Aorta (tissue), 5 donors: ENCODE measurements at regions of chr1 and their contacts with region 1.

Region 1: GRCh38 chr1:204453141-204453772 is 41.3 kb downstream of the PIK3C2B start:
- DNase-seq: no peak
- ATAC-seq: no peak
- H3K4me3 ChIP-seq: no peak overlapping the region
- H3K27ac ChIP-seq: no peak overlapping the region
- H3K4me1 ChIP-seq: no peaks in the 10 kb centered on the region
- H3K27me3 ChIP-seq: no peaks in the 10 kb centered on the region

Region 2: GRCh38 chr1:204494281-204495077 is 41.2 kb after region 1 on chr1 and contains the start of gene PIK3C2B:
- intact Hi-C with region 1: loop called in 1 of 2 experiments (anchors 5 kb)
- DNase-seq: peak; percentile 92 to 94
- ATAC-seq: peak; percentile 94
- H3K4me3 ChIP-seq: peak within 1 kb of the TSS; percentile 51 to 85
- H3K27ac ChIP-seq: peak within 1 kb of the TSS in 1 of 2 donors; percentile 62
- H3K4me1 ChIP-seq: peaks cover 0 to 4% of the 10 kb centered on the region in 2 donors
- H3K27me3 ChIP-seq: no peaks in the 10 kb centered on the region
- total RNA-seq, gene PIK3C2B: 41.3 to 87.5 TPM